ENCODE measurements at regions of chr17 and their contacts with region 1.

Region 1: GRCh38 chr17:34361478-34362061 is 1.5 kb downstream of the CCL1 start:
- DNase-seq: no peak
- H3K4me3 ChIP-seq: no peak overlapping the region
- H3K27me3 ChIP-seq: peaks cover 4% of the 10 kb centered on the region; the same call in 1 of the 2 replicates
- CTCF ChIP-seq: peak; percentile 100

Region 2: GRCh38 chr17:34081269-34081668 is 280.3 kb before region 1 on chr17:
- CTCF ChIA-PET with region 1: interaction called, 26 read pairs
- POLR2A ChIA-PET with region 1: no interaction called
- DNase-seq: no peak
- H3K4me3 ChIP-seq: no peak overlapping the region
- H3K27me3 ChIP-seq: no peaks in the 10 kb centered on the region
- CTCF ChIP-seq: peak; percentile 49

Region 3: DNA sequence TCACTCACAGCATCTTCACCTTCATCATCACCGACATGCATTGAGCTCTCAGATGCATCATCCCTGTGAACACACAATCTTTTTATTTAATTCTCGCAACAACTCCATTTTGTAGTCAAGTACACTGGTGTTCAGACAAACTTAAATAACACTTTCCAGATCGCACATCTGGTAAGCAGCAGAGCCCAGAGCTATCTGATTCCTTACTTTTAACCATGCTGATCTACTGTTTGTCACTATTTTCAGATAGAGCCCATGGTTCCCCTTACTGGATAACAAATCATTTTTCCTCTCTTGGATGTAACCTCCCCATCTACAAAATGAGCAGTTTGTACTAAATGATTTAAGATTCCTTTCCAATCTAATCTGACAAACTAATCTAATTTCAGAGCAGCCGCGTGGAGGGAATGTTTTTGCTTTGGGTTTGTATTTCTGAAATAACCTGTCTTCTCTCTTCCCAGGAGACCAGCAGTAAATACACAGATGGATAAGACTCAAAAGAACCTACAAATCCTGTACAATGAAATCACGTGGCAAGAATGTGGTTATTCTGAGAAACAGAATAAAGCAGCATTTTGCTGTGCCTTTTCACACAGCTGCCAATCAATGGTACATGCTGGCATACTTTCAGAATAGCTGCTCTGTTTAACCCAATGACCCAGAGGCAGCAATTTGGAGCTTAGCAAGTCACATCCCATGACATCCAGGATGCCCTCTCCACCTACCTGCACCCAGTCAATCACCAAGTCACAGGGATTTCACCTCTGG is 179.3 kb before region 1 on chr17:
- CTCF ChIA-PET with region 1: interaction called, 13 read pairs
- POLR2A ChIA-PET with region 1: no interaction called
- DNase-seq: no peak
- H3K4me3 ChIP-seq: no peak overlapping the region
- H3K27me3 ChIP-seq: peaks cover 3% of the 10 kb centered on the region; the same call in 1 of the 2 replicates
- CTCF ChIP-seq: no peak

Region 4: DNA sequence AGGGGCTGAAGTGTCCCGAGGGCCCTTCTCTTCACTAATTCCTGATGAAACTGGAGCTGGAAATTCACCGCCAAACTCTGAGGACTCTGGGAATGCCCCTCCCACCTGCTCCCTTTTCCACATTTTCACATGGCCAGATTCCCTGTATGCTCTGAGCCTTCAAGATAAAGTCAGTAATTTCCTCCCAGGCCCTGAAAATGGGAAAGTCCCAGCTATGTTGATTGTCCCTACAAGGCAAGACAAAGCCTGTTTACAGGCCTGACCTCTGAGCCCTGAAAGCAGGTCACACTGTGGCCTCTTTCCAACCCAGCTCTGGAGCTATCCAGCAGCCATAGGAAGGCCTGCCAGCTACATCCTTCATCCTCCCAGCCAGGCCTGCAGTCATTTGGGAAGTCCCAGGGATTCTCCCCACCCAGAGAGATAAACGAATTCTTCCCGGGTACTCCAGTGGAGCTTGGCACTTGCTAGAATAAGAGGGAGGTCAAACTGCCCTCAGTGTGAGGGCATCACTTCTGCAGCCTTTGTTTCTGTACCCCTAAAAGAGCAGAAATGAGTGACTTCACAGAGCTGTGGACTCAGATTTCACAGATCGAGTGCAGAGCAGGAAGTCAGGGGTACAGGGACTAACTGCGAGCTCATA is 126.1 kb before region 1 on chr17:
- CTCF ChIA-PET with region 1: interaction called, 25 read pairs
- POLR2A ChIA-PET with region 1: no interaction called
- DNase-seq: no peak
- H3K4me3 ChIP-seq: no peak overlapping the region
- H3K27me3 ChIP-seq: no peaks in the 10 kb centered on the region
- CTCF ChIP-seq: no peak

Region 5: DNA sequence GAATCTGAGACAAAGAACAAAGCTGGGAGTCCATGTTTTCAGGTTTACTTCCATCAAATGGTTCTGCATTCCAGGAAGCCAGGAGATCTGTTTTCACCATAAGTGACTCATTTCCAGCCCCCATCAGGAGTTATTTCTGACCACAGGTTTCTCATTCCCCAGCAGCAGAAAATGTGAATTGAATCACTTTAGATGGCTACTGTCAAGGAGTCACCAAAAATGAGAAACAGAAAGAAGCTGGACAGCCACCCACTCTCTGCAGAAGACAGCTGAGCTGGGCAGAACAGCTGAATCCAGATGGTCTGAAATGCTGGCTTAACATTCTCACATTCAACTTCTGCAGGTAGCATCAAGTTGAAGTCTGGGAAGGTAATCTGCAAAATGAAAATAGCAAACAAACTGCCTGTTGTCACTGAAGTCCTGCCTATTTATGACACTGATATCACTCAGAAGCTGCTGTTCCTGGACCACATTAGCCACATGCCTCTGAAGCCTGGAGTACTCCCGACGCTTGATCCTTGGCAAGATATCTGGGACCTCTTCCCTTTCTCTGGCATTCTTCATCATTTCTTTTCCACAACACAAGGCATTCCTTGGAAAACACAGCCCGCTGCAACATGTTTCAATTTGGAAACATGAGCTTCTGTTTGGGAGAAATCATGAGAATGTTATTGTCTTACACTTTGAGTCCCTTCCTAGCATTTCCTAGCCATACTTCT is 60.8 kb before region 1 on chr17:
- CTCF ChIA-PET with region 1: interaction called, 148 read pairs
- POLR2A ChIA-PET with region 1: no interaction called
- DNase-seq: no peak
- H3K4me3 ChIP-seq: no peak overlapping the region
- H3K27me3 ChIP-seq: no peaks in the 10 kb centered on the region
- CTCF ChIP-seq: no peak

Region 6: DNA sequence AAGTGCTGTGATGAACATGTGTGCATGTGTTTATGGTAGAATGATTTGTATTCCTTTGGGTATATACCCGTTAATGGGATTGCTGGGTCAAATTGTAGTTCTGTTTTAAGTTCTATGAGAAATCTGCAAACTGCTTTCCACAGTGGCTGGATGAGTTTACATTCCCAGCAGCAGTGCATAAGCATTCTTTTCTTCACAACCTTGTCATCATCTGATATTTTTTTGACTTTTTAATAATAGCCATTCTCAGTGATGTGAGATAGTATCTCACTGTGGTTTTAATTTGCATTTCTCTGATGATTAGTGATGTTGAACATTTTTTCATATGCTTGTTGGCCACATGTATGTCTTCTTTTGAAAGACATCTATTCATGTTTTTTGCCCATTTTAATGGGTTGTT is 23.9 kb before region 1 on chr17:
- CTCF ChIA-PET with region 1: interaction called, 17 read pairs
- POLR2A ChIA-PET with region 1: no interaction called
- DNase-seq: no peak
- H3K4me3 ChIP-seq: no peak overlapping the region
- H3K27me3 ChIP-seq: peaks cover 3% of the 10 kb centered on the region
- CTCF ChIP-seq: no peak

Region 7: GRCh38 chr17:34443619-34444469 is 82.3 kb after region 1 on chr17:
- CTCF ChIA-PET with region 1: no interaction called
- POLR2A ChIA-PET with region 1: no interaction called
- DNase-seq: no peak
- H3K4me3 ChIP-seq: no peak overlapping the region
- H3K27me3 ChIP-seq: no peaks in the 10 kb centered on the region; the same call in none of the 2 replicates
- CTCF ChIP-seq: no peak

Region 8: DNA sequence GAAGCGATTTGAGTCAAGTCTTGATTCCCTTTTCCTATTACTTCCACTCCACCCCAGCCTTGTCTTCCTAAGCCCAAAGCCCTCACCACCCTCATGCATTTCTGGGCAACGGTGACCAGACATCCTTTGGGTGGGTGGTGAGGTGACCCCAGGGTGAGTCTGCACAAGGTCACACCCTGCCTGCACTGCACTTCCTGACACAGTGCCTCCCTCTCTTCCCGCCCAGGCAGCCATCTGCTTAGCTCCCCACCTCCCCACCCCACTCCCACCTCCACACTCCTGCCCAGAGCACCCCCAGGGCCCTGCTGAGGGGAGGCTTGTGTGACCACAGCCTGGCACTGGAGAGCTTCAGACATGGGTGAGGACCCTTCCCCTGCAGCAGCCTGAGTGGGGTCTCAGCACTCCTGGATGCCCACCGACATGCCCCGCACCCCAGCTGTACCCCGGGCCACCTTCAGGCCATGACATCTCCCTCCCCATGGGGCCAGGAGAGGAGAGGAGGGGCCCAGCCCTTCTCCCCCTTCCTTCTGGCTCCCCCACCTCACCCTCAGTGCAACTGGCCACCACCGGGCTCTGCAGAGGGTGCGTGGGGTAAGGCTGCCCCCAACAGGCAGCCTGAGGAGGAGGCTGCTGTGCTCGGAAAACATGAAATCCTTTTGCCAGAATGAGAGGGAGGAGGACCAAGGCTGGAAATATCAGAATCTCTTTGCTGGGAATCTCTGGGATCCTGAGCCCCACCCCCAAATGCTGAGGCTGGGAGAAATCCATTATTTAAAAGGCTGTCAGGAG is 531.1 kb after region 1 on chr17:
- CTCF ChIA-PET with region 1: no interaction called
- POLR2A ChIA-PET with region 1: no interaction called
- DNase-seq: no peak
- H3K4me3 ChIP-seq: no peak overlapping the region
- H3K27me3 ChIP-seq: 0 out of 2 replicates have a peak, but pooled peaks cover 2% of the 10 kb centered on the region
- CTCF ChIP-seq: peak; percentile 43

Measured in BJ (cell line).